Naive thymus-derived CD4-positive, alpha-beta T cell (primary cell): ENCODE measurements at regions of chr2 and their contacts with region 1.

Region 1: GRCh38 chr2:189412330-189412953 is 28.8 kb upstream of the WDR75 start:
- DNase-seq: peak in 8 of 9 donors; percentile 18 to 64 (median 51)
- ATAC-seq: peak; percentile 67
- H3K4me3 ChIP-seq: no peak overlapping the region
- H3K4me3 Mint-ChIP-seq: no peak overlapping the region
- H3K27ac ChIP-seq: no peak overlapping the region
- H3K27ac Mint-ChIP-seq: no peak overlapping the region
- H3K4me1 ChIP-seq: peaks cover 0 to 7% of the 10 kb centered on the region in 2 donors
- H3K4me1 Mint-ChIP-seq: peaks cover 4 to 12% (median 9%) of the 10 kb centered on the region in 7 donors
- H3K27me3 ChIP-seq: no peaks in the 10 kb centered on the region
- H3K27me3 Mint-ChIP-seq: no peaks in the 10 kb centered on the region

Region 2: GRCh38 chr2:187581125-187581896 is 1831.1 kb before region 1 on chr2:
- CTCF ChIA-PET with region 1: no interaction called
- POLR2A ChIA-PET with region 1: no interaction called
- intact Hi-C with region 1: loop called in 1 of 2 experiments (anchors 2 kb)
- DNase-seq: peak in 5 of 9 donors; percentile 6 to 37 (median 18)
- ATAC-seq: no peak
- H3K4me3 ChIP-seq: no peak overlapping the region
- H3K4me3 Mint-ChIP-seq: no peak overlapping the region
- H3K27ac ChIP-seq: no peak overlapping the region
- H3K27ac Mint-ChIP-seq: no peak overlapping the region
- H3K4me1 ChIP-seq: no peaks in the 10 kb centered on the region
- H3K4me1 Mint-ChIP-seq: peaks cover 0 to 8% (median 7%) of the 10 kb centered on the region in 7 donors
- H3K27me3 ChIP-seq: no peaks in the 10 kb centered on the region
- H3K27me3 Mint-ChIP-seq: peaks cover 0 to 5% (median 0%) of the 10 kb centered on the region in 5 donors

Region 3: DNA sequence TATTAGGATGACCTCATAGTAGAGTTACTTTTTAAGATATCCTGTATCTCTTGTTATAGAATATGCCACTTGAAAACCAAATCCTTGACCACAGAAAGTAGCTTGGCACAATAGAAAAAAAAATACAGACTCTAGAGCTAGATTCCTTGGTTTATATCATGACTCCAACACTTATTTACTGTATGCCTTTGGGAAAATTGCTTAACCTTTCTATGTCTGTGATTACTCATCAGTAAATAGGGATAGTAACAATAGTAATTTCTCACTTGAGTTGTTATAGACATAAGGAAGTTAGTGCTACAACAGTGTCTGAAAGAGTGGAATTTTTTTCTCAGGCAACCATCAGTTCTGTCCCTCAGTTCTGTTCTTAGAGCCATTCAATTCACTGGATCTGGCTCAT is 926.9 kb before region 1 on chr2:
- CTCF ChIA-PET with region 1: no interaction called
- POLR2A ChIA-PET with region 1: no interaction called
- intact Hi-C with region 1: no loop called
- DNase-seq: no peak
- ATAC-seq: no peak
- H3K4me3 ChIP-seq: no peak overlapping the region
- H3K4me3 Mint-ChIP-seq: no peak overlapping the region
- H3K27ac ChIP-seq: no peak overlapping the region
- H3K27ac Mint-ChIP-seq: no peak overlapping the region
- H3K4me1 ChIP-seq: no peaks in the 10 kb centered on the region
- H3K4me1 Mint-ChIP-seq: no peaks in the 10 kb centered on the region
- H3K27me3 ChIP-seq: no peaks in the 10 kb centered on the region
- H3K27me3 Mint-ChIP-seq: no peaks in the 10 kb centered on the region

Region 4: DNA sequence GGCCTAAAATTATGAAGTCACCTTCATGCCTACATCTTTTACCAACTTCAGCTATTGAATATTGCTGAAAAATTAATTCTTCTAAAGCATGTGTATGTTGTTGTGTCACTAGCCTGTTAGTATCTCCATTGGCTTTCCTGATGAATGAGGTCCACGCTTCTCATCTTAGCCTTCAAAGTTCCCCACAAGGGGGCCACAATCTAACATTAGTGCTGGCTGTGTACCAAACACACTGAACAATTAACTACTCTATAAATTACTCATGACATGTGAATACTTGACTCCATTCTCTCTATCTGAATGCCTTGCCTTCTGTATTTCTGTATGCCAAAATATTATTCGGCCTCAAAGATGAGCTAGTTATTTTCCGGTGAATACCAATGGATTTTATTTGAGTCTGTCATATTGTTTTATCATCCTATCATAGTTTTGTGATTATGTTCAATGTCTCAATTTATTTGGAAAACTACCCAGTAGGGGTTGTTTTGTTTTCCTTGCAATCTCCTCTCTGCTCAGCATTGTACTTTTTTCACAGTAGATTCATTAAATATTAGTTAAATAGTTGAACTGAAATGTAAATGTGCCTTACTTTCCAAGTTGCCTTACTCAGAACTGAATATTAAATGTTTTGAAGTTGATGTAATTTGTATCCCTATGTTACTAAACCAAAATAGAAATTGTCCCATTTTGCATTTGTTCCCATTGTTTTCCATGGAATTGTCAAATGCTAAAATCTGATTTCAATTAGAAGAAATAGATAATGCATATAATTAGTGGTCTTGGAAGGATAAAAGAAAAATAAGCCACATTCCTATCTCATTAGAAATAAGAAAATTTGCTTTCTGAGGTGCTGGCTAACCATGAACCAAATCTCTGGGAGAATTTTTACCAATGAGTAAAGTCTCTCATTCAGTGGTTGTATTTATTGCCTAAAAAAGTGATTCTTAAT is 646.6 kb before region 1 on chr2:
- CTCF ChIA-PET with region 1: no interaction called
- POLR2A ChIA-PET with region 1: no interaction called
- intact Hi-C with region 1: loop called in 1 of 2 experiments (anchors 5 kb)
- DNase-seq: no peak
- ATAC-seq: no peak
- H3K4me3 ChIP-seq: no peak overlapping the region
- H3K4me3 Mint-ChIP-seq: no peak overlapping the region
- H3K27ac ChIP-seq: no peak overlapping the region
- H3K27ac Mint-ChIP-seq: no peak overlapping the region
- H3K4me1 ChIP-seq: no peaks in the 10 kb centered on the region
- H3K4me1 Mint-ChIP-seq: no peaks in the 10 kb centered on the region
- H3K27me3 ChIP-seq: no peaks in the 10 kb centered on the region
- H3K27me3 Mint-ChIP-seq: no peaks in the 10 kb centered on the region

Region 5: DNA sequence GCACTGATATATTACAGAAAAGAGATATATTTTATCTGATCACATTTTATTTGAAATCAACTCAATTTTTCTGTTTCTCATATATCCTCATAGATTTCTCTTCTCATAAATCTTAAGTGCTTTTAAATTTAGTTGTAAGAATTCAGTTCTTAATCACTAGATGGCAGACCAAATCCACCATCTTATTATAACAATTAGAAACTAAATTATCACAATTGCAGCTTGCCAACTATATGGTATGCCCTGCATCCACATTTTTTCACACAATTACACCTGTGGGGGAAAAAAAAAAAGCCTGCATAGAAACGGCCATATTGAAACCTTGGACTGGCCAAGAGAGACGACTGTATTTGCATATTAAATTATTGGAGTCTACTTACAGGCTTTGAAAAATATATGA is 297.3 kb before region 1 on chr2:
- CTCF ChIA-PET with region 1: no interaction called
- POLR2A ChIA-PET with region 1: no interaction called
- intact Hi-C with region 1: loop called in 1 of 2 experiments (anchors 1 kb)
- DNase-seq: no peak
- ATAC-seq: no peak
- H3K4me3 ChIP-seq: no peak overlapping the region
- H3K4me3 Mint-ChIP-seq: no peak overlapping the region
- H3K27ac ChIP-seq: no peak overlapping the region
- H3K27ac Mint-ChIP-seq: no peak overlapping the region
- H3K4me1 ChIP-seq: no peaks in the 10 kb centered on the region
- H3K4me1 Mint-ChIP-seq: peaks cover 0 to 2% (median 0%) of the 10 kb centered on the region in 7 donors
- H3K27me3 ChIP-seq: no peaks in the 10 kb centered on the region
- H3K27me3 Mint-ChIP-seq: peaks cover 0 to 4% (median 0%) of the 10 kb centered on the region in 5 donors

Region 6: GRCh38 chr2:189238903-189239302 is 173.5 kb before region 1 on chr2:
- CTCF ChIA-PET with region 1: no interaction called
- POLR2A ChIA-PET with region 1: no interaction called
- intact Hi-C with region 1: loop called in 1 of 2 experiments (anchors 1 kb)
- DNase-seq: no peak
- ATAC-seq: no peak
- H3K4me3 ChIP-seq: no peak overlapping the region
- H3K4me3 Mint-ChIP-seq: no peak overlapping the region
- H3K27ac ChIP-seq: no peak overlapping the region
- H3K27ac Mint-ChIP-seq: no peak overlapping the region
- H3K4me1 ChIP-seq: no peaks in the 10 kb centered on the region
- H3K4me1 Mint-ChIP-seq: peaks cover 0 to 2% (median 0%) of the 10 kb centered on the region in 7 donors
- H3K27me3 ChIP-seq: no peaks in the 10 kb centered on the region
- H3K27me3 Mint-ChIP-seq: no peaks in the 10 kb centered on the region

Region 7: DNA sequence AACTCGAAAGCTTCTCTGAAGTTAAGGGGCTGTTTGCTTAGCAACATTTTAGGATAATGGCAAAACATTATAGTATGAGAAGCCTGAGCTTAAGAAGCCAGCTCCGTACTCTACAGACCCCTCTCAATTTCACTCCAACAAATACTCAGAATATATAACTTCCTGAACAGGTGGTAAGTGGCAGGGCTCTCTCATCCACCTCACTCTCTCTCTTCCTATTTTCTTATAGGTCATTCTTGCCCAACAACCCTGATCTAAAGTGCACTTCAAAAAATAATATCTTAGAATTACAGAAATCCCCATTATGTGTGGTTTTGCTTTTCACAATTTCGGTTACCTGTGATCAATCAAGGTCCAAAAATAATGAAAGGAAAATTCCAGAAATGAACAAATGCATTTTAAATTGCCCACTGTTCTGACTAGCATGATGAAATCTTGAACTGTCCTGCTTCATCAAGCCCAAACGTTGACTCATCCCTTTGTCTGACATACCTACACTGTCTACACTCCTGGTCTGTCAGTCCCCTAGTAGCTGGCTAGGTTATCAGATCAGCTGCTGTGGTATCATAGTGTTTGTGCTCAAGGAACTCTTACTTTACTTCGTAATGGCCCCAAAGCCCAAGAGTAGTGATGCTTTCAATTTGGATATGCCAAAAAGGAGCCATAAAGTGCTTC is 110.0 kb before region 1 on chr2:
- CTCF ChIA-PET with region 1: no interaction called
- POLR2A ChIA-PET with region 1: no interaction called
- intact Hi-C with region 1: loop called (anchors 5 kb)
- DNase-seq: no peak
- ATAC-seq: no peak
- H3K4me3 ChIP-seq: no peak overlapping the region
- H3K4me3 Mint-ChIP-seq: peak overlapping the region in 8 of 10 donors; percentile 4 to 74 (median 60)
- H3K27ac ChIP-seq: no peak overlapping the region
- H3K27ac Mint-ChIP-seq: peak overlapping the region in 8 of 9 donors; percentile 25 to 95 (median 70)
- H3K4me1 ChIP-seq: peaks cover 56 to 88% of the 10 kb centered on the region in 2 donors
- H3K4me1 Mint-ChIP-seq: peaks cover 57 to 96% (median 91%) of the 10 kb centered on the region in 7 donors
- H3K27me3 ChIP-seq: no peaks in the 10 kb centered on the region
- H3K27me3 Mint-ChIP-seq: no peaks in the 10 kb centered on the region

Region 8: DNA sequence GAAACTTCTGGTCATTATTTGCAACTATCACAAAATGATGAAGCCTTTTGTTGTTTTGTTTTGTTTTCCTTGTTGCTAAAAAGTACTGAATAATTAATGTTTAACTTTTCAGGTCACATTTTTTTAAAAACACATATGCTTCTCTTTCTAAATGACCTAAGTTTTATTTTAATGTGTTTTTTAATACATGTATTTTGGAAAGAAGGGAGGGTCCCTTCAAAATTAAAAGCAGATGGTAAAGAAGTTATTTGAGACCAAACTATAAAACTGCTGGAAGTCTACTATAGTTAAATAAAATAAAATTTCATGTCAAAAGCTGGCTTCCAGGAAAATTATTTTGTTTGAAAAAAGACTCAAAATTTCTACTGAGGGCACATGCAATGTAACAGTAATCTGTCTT is 209.3 kb after region 1 on chr2:
- CTCF ChIA-PET with region 1: no interaction called
- POLR2A ChIA-PET with region 1: no interaction called
- intact Hi-C with region 1: no loop called
- DNase-seq: no peak
- ATAC-seq: no peak
- H3K4me3 ChIP-seq: no peak overlapping the region
- H3K4me3 Mint-ChIP-seq: no peak overlapping the region
- H3K27ac ChIP-seq: no peak overlapping the region
- H3K27ac Mint-ChIP-seq: no peak overlapping the region
- H3K4me1 ChIP-seq: peaks cover 0 to 5% of the 10 kb centered on the region in 2 donors
- H3K4me1 Mint-ChIP-seq: peaks cover 6 to 28% (median 24%) of the 10 kb centered on the region in 7 donors
- H3K27me3 ChIP-seq: no peaks in the 10 kb centered on the region
- H3K27me3 Mint-ChIP-seq: no peaks in the 10 kb centered on the region